Calu3 (cell line): ENCODE measurements at regions of chr2 and their contacts with region 1.

Region 1: GRCh38 chr2:154375579-154375931 is 322.9 kb upstream of the KCNJ3 start:
- DNase-seq: peak; percentile 8
- H3K4me3 Mint-ChIP-seq: peak overlapping the region; percentile 51
- H3K27ac Mint-ChIP-seq: no peak overlapping the region
- H3K4me1 Mint-ChIP-seq: no peaks in the 10 kb centered on the region
- H3K27me3 Mint-ChIP-seq: no peaks in the 10 kb centered on the region
- CTCF ChIP-seq: peak; percentile 49

Region 2: DNA sequence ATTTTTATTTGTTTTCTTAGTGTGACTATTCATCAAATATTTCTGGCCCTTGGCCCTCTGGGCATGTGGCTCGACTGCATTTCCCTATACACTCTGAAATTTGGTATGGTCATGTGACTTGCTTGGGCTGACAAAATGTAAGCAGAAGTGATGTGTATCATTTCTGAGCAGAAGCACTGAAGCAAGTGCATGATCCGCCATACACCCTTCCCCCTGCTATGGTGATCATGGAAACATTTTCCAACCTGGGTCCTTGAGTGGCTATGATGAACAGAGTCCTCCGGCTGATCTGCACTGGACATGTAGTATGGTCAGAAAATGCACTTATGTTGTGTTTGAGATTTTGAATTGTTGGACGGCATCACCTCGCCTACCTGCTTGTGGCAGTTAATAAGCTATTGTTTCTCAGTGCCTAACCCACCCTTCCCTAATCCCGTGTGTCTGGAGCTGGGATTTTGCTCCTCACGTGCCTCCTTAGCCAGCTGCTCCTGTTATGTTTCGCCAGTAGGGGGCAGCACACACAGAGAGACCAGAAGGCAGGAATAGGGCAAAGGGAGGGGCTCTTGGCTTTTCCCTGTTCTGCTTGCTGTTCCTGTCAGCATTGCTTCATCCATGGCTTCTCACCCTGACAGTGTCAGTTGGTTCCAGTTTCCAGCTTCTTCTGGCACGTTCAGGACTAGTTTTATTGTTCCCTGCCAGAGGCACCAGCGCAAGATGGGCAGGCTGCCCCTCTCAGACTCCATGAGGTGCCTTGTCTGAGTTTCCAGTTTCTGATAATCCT is 1449.8 kb before region 1 on chr2:
- CTCF ChIA-PET with region 1: no interaction called
- intact Hi-C with region 1: loop called (anchors 5 kb)
- DNase-seq: peak; percentile 80
- H3K4me3 Mint-ChIP-seq: no peak overlapping the region
- H3K27ac Mint-ChIP-seq: no peak overlapping the region
- H3K4me1 Mint-ChIP-seq: no peaks in the 10 kb centered on the region
- H3K27me3 Mint-ChIP-seq: peaks cover 24% of the 10 kb centered on the region
- CTCF ChIP-seq: peak; percentile 83

Region 3: DNA sequence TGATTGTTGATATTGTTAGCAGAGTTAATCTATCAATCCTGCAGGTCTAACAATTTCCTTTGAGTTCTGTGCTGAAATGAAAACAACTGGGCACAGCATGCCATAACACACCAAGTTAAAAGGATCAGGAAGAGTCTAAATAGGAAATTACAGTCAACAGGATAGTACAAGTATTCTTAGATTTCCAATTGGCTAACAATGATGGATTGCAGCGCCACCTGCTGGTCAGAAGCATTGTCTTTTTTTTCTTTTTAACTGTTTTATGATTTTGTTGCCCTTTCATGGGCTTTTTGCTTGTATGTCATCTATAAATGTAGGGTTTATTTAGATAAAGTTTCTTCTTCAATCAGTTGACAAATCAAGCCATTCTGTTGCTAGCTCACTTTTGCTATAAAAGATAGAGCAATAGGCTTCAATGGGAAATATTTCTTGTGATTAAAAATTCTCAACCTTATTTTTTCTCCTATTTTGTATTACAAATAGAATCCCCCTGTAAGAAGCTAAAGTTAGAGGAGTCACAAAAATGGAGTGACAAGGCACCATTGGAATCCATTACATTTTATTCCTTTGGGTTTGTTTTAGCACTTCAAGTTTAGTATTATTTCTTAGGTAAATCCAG is 856.2 kb before region 1 on chr2:
- CTCF ChIA-PET with region 1: no interaction called
- intact Hi-C with region 1: loop called (anchors 10 kb)
- DNase-seq: peak; percentile 54
- H3K4me3 Mint-ChIP-seq: no peak overlapping the region
- H3K27ac Mint-ChIP-seq: no peak overlapping the region
- H3K4me1 Mint-ChIP-seq: no peaks in the 10 kb centered on the region
- H3K27me3 Mint-ChIP-seq: no peaks in the 10 kb centered on the region
- CTCF ChIP-seq: peak; percentile 62

Region 4: GRCh38 chr2:153787612-153788011 is 587.9 kb before region 1 on chr2:
- CTCF ChIA-PET with region 1: interaction called, 3 read pairs
- intact Hi-C with region 1: loop called (anchors 5 kb)
- DNase-seq: no peak
- H3K4me3 Mint-ChIP-seq: no peak overlapping the region
- H3K27ac Mint-ChIP-seq: no peak overlapping the region
- H3K4me1 Mint-ChIP-seq: no peaks in the 10 kb centered on the region
- H3K27me3 Mint-ChIP-seq: no peaks in the 10 kb centered on the region
- CTCF ChIP-seq: no peak

Region 5: GRCh38 chr2:153986488-153987229 is 388.9 kb before region 1 on chr2:
- CTCF ChIA-PET with region 1: no interaction called
- intact Hi-C with region 1: loop called (anchors 10 kb)
- DNase-seq: peak; percentile 19
- H3K4me3 Mint-ChIP-seq: peak overlapping the region; percentile 15
- H3K27ac Mint-ChIP-seq: peak overlapping the region; percentile 83
- H3K4me1 Mint-ChIP-seq: peaks cover 32% of the 10 kb centered on the region
- H3K27me3 Mint-ChIP-seq: no peaks in the 10 kb centered on the region
- CTCF ChIP-seq: no peak